ENCODE measurements at regions of chr12 and their contacts with region 1.

Region 1: DNA sequence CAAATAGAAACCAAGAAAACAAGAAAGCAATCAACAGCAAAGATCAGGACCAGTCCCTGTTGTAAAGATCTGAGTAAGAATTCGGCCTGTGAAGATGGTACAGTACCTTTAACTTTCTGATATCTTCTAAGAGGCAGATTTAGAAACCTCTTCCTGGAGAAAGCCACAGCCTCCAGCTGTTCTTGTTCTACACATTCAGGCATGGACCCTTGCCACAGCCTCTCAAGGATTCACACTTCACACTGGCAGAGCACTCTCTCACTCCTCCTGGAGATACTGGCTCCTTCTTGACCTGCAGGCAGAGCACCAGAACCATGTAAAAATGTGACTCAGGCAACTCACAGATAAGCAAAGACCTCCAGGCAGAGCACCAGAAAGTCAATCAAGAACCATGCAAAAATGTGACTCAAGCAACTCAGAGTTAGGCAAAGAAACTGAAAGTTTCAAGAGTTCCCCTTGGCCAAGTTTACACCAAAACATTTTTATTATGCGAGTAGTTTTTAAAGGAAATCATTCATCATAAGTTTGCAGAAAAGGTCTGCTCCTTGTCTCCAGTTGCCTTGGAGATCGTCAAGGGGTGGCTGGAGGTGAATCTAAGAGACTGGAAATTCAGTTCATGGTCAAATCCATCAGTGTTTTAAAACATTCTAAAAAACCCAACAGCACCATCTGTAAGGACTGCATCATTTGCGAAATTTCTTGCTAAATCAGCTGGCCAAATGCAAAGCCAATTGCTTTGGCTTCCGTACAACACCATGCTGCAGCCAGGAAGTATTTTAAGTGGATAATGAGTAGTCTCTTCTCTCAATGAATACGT is 119.3 kb upstream of the MDM1 start:
- DNase-seq: peak; percentile 53
- H3K4me3 Mint-ChIP-seq: peak overlapping the region; percentile 73
- H3K27ac Mint-ChIP-seq: peak overlapping the region; percentile 97
- H3K4me1 Mint-ChIP-seq: peaks cover 99% of the 10 kb centered on the region
- H3K27me3 Mint-ChIP-seq: no peaks in the 10 kb centered on the region

Region 2: DNA sequence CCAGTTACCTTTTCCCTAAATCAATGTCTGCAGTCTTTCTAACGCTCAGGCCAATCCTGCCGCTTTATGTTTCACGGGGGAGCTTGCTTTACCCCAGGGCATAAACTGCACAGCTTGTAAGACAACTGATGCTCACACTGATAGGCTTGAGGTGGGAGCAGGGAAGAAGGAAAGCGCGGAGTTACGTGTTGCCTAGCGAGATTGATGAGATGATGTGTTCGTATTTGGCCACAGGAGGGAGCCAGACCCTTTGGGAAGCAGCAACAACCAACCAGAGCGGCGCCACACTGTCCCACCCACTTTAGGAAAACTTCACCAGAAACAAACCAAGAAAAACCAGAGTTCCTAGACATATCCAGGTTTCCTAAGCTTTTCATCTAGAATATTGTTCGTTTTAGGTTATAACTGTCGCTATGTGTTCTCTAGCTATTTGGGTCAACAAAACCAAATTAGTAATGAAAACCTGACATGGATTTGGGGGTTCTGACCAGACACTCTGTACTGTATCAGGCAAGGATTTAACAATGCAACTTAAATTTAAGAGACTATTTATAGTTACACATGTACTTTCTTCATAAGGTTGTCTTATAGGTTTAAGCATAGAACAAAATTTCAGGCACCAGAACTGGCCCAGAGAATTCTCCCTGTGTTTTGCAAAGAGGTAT is 228.3 kb before region 1 on chr12:
- intact Hi-C with region 1: loop called (anchors 1 kb)
- DNase-seq: peak; percentile 68
- H3K4me3 Mint-ChIP-seq: peak overlapping the region; percentile 79
- H3K27ac Mint-ChIP-seq: peak overlapping the region; percentile 61
- H3K4me1 Mint-ChIP-seq: peaks cover 56% of the 10 kb centered on the region
- H3K27me3 Mint-ChIP-seq: no peaks in the 10 kb centered on the region

Region 3: GRCh38 chr12:68364893-68365725 is 86.4 kb before region 1 on chr12:
- intact Hi-C with region 1: loop called (anchors 1 kb)
- DNase-seq: peak; percentile 85
- H3K4me3 Mint-ChIP-seq: peak overlapping the region; percentile 77
- H3K27ac Mint-ChIP-seq: peak overlapping the region; percentile 92
- H3K4me1 Mint-ChIP-seq: peaks cover 76% of the 10 kb centered on the region
- H3K27me3 Mint-ChIP-seq: no peaks in the 10 kb centered on the region

Region 4: GRCh38 chr12:68482660-68483059 is 31.2 kb after region 1 on chr12:
- intact Hi-C with region 1: loop called (anchors 1 kb)
- DNase-seq: peak; percentile 44
- H3K4me3 Mint-ChIP-seq: peak overlapping the region; percentile 66
- H3K27ac Mint-ChIP-seq: peak overlapping the region; percentile 91
- H3K4me1 Mint-ChIP-seq: peaks cover 69% of the 10 kb centered on the region
- H3K27me3 Mint-ChIP-seq: no peaks in the 10 kb centered on the region

Region 5: DNA sequence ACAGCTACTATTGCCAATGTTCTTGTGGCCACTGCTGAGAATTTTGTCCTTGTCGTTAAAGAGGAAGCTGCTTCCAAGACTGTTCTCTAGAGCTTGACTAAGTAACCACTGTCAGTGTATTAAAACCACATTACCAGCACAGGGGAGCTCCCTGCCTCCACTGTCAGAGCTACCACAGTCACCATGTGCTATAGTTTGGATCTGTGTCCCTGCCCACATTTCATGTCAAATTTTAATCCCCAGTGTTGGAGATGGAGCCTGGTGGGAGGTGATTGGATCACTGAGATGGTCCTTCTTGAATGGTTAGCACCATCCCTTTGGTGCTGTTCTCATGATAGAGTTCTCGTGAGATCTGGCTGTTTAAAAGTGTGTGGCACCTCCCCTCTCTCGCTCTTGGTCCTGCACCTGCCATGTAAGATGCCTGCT is 136.0 kb after region 1 on chr12:
- intact Hi-C with region 1: loop called (anchors 2 kb)
- DNase-seq: peak; percentile 38
- H3K4me3 Mint-ChIP-seq: peak overlapping the region; percentile 7
- H3K27ac Mint-ChIP-seq: peak overlapping the region; percentile 31
- H3K4me1 Mint-ChIP-seq: peaks cover 32% of the 10 kb centered on the region
- H3K27me3 Mint-ChIP-seq: no peaks in the 10 kb centered on the region

Region 6: GRCh38 chr12:68686595-68687521 is 235.4 kb after region 1 on chr12 and contains the start of gene NUP107:
- intact Hi-C with region 1: loop called (anchors 1 kb)
- DNase-seq: peak; percentile 95
- H3K4me3 Mint-ChIP-seq: peak within 1 kb of the TSS; percentile 99
- H3K27ac Mint-ChIP-seq: peak within 1 kb of the TSS; percentile 96
- H3K4me1 Mint-ChIP-seq: peaks cover 37% of the 10 kb centered on the region
- H3K27me3 Mint-ChIP-seq: peaks cover 3% of the 10 kb centered on the region
- total RNA-seq, gene NUP107: 123 and 135 TPM in 2 replicates